ENCODE measurements at regions of chr1 and their contacts with region 1.

Region 1: DNA sequence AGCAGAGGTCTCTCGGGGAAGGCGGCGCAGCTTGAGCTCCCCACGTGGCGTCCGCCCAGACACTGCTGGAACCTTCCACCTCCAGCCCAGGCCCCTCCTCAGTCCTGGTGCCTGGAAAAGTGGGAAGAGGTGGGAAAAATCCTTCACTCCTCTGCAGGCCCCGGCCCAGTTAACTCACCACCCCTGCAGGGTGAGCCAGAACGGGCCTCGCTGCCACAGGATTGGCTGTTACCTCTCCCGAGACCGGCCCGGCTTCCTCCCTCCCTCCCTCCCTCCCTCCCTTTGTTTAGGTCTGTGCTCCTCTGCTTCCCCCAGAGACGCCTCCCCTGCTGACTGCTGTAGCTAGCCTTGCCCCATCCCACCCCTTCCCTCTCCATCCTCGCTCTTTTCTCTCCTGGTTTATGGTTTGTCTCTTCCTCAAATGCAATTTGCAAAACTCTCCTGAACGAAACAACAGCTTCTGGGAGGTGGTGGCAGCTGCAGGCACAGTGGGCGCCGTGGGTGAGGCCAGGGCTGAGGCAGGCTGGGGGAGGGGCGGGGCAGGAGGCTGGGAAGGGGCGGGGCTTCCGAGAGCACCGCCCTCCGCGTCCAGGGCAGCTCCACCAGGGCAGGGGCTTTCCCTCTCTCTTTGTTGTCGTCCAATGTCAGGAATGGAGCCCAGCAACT is 6.5 kb downstream of the CAPN9 start:
- DNase-seq: no peak
- H3K4me3 ChIP-seq: no peak overlapping the region
- H3K27ac ChIP-seq: no peak overlapping the region
- H3K4me1 ChIP-seq: peaks cover 39% of the 10 kb centered on the region
- H3K27me3 ChIP-seq: no peaks in the 10 kb centered on the region
- CTCF ChIP-seq: no peak

Region 2: GRCh38 chr1:230978491-230979388 is 225.0 kb after region 1 on chr1 and contains the starts of genes ARV1 and TTC13:
- CTCF ChIA-PET with region 1: no interaction called
- POLR2A ChIA-PET with region 1: no interaction called
- intact Hi-C with region 1: loop called (anchors 5 kb)
- DNase-seq: peak; percentile 97 to 98
- H3K4me3 ChIP-seq: peak within 1 kb of the TSS; percentile 86
- H3K27ac ChIP-seq: no peak within 1 kb of the TSS
- H3K4me1 ChIP-seq: peaks cover 19% of the 10 kb centered on the region
- H3K27me3 ChIP-seq: no peaks in the 10 kb centered on the region
- CTCF ChIP-seq: peak; percentile 50; the same call in 1 of the 2 replicates
- total RNA-seq, gene ARV1: 8.0 and 12.0 TPM in 2 replicates
- total RNA-seq, gene TTC13: 7.5 and 10.7 TPM in 2 replicates

Region 3: DNA sequence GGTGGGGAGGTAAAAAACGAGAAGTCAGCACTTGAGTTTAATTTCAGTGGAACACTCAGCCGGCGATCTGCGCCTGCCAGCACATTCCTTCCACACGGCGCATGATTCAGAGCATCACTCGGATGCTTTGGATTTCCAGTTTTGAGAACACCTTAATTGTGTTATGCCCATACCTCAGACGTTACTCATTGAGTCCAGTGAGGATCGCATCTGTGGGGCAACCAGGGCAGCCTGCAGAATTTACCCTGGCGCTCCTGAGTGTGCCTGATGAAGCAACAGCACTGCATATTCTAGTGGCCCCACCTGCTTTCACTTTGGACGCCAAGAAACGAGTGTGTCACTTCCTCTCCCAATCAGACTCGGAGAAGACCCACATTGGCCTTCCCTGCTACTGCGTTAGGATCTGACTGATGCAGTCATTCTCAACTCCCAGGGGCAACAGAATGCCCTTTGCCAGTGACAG is 266.5 kb after region 1 on chr1:
- CTCF ChIA-PET with region 1: no interaction called
- POLR2A ChIA-PET with region 1: no interaction called
- intact Hi-C with region 1: no loop called
- DNase-seq: peak in 1 of 2 experiments; percentile 68
- H3K4me3 ChIP-seq: peak overlapping the region; percentile 26; the same call in 1 of the 2 replicates
- H3K27ac ChIP-seq: no peak overlapping the region
- H3K4me1 ChIP-seq: peaks cover 5% of the 10 kb centered on the region; the same call in 1 of the 2 replicates
- H3K27me3 ChIP-seq: peaks cover 6% of the 10 kb centered on the region; the same call in 1 of the 2 replicates
- CTCF ChIP-seq: no peak

Region 4: GRCh38 chr1:231478019-231478785 is 724.5 kb after region 1 on chr1:
- CTCF ChIA-PET with region 1: no interaction called
- POLR2A ChIA-PET with region 1: no interaction called
- intact Hi-C with region 1: no loop called
- DNase-seq: no peak
- H3K4me3 ChIP-seq: no peak overlapping the region
- H3K27ac ChIP-seq: no peak overlapping the region
- H3K4me1 ChIP-seq: no peaks in the 10 kb centered on the region
- H3K27me3 ChIP-seq: no peaks in the 10 kb centered on the region
- CTCF ChIP-seq: no peak